Activated CD4-positive, alpha-beta T cell treated with anti-CD3 and anti-CD28 coated beads for 36 hours (primary cell): ENCODE measurements at regions of chr7 and their contacts with region 1.

Region 1: DNA sequence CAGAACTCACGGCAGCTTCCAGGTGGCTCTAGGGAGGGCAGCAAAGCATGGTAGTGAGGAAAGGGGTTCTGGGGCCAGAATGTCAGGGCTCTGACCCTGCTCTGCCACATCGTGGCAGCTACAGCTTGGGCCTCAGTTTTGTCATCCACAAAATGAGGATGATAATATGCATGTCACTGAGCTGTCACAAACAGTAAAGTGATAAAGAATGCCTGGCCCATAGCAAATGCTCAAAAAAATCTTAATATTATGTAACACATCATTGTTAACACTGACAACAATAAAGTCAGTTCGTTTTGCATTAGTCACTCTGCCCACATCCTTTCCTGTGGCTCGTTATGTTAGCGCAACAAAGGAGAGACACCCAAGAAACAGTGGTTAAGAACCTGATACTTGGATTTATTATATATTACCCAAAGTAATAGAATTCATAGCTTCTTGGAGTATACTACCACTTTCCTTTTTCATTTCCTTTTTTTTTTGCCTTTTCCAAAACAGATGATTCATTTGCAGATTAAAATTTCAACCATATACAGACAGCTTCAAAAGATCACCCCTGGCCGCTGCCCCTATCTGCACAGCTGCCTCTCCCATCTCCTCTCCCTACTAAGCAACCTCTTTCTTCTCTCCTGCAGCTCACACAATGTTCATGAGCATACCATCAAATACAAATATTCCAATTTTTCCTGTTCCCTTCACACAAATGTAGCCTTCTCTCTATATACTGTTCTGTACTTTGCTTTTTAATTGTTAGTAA is 45.5 kb upstream of the DDC start:
- DNase-seq: peak; percentile 69
- ATAC-seq: peak; percentile 80
- H3K4me3 Mint-ChIP-seq: no peak overlapping the region
- H3K27ac Mint-ChIP-seq: no peak overlapping the region
- H3K4me1 Mint-ChIP-seq: peaks cover 29% of the 10 kb centered on the region
- H3K27me3 Mint-ChIP-seq: peaks cover 3% of the 10 kb centered on the region

Region 2: GRCh38 chr7:50513166-50513871 is 97.4 kb before region 1 on chr7:
- CTCF ChIA-PET with region 1: no interaction called
- POLR2A ChIA-PET with region 1: no interaction called
- intact Hi-C with region 1: no loop called
- DNase-seq: no peak
- ATAC-seq: no peak
- H3K4me3 Mint-ChIP-seq: no peak overlapping the region
- H3K27ac Mint-ChIP-seq: no peak overlapping the region
- H3K4me1 Mint-ChIP-seq: no peaks in the 10 kb centered on the region
- H3K27me3 Mint-ChIP-seq: peaks cover 41% of the 10 kb centered on the region

Region 3: DNA sequence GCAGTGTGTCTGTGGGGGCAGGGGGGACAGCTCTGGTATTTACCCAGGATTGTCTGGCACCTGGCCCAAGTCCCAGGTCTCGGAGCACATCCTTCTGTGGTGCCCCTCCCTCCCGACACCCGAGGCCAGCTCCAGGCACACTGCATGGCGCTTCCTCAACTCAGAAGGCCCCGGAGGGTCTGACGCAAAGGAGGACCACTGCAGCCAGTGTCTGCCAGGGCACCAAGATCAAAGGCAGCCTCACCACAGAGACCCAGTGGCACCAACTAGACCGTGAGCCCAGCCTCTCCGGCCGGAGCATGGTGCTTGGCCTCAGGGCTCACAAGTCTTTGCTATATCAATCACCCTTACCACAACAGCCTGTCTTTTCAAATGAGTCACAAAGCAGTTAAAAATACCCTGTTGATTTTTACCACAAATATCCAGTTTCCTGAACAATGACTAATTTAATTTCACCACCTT is 53.8 kb after region 1 on chr7:
- CTCF ChIA-PET with region 1: no interaction called
- POLR2A ChIA-PET with region 1: no interaction called
- intact Hi-C with region 1: loop called in 1 of 2 experiments (anchors 5 kb)
- DNase-seq: peak; percentile 47
- ATAC-seq: peak; percentile 69
- H3K4me3 Mint-ChIP-seq: no peak overlapping the region
- H3K27ac Mint-ChIP-seq: no peak overlapping the region
- H3K4me1 Mint-ChIP-seq: peaks cover 59% of the 10 kb centered on the region
- H3K27me3 Mint-ChIP-seq: peaks cover 2% of the 10 kb centered on the region

Region 4: GRCh38 chr7:50679218-50680007 is 68.7 kb after region 1 on chr7:
- CTCF ChIA-PET with region 1: no interaction called
- POLR2A ChIA-PET with region 1: no interaction called
- intact Hi-C with region 1: loop called in 1 of 2 experiments (anchors 5 kb)
- DNase-seq: no peak
- ATAC-seq: peak; percentile 78
- H3K4me3 Mint-ChIP-seq: no peak overlapping the region
- H3K27ac Mint-ChIP-seq: no peak overlapping the region
- H3K4me1 Mint-ChIP-seq: no peaks in the 10 kb centered on the region
- H3K27me3 Mint-ChIP-seq: no peaks in the 10 kb centered on the region

Region 5: DNA sequence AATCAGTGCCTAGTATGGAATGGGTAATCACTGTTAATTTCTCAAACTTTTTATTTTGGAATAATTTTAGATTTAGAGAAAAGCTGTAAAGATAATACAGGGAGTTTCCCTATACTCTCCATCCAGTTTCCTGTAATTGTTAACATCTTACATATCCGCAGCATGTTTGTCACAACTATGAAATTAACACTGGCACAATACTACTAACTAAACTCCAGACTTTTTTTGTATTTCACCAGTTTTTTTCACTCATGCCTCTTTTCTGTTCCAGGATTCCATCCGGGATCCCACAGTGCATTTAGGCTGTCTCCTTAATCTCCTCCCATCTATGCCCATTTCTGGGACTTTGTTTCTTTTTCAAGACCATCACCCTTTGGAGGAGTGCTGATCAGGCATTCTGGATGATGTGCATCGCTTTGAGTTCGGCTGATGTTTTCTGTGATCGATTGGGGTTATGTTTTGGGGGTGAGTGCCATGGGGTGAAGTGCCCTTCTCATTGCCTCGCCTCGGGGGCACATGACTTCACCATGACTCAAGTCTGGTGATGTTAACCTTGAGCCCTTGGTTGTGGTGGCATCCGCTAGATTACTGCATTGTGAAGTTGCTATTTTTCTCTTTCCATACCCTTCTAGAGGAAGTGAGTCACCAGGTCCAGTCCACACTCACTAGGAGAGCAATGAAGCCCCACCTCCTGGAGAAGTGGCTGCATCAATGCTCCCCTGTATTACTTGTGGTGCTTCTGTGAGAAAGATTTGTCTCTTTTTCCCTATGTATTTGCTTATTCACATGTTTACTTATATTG is 215.9 kb after region 1 on chr7:
- CTCF ChIA-PET with region 1: no interaction called
- POLR2A ChIA-PET with region 1: no interaction called
- intact Hi-C with region 1: loop called in 1 of 2 experiments (anchors 5 kb)
- DNase-seq: peak; percentile 76
- ATAC-seq: peak; percentile 99
- H3K4me3 Mint-ChIP-seq: no peak overlapping the region
- H3K27ac Mint-ChIP-seq: no peak overlapping the region
- H3K4me1 Mint-ChIP-seq: peaks cover 16% of the 10 kb centered on the region
- H3K27me3 Mint-ChIP-seq: peaks cover 11% of the 10 kb centered on the region